ENCODE measurements at regions of chr1 and their contacts with region 1.

Region 1: GRCh38 chr1:154760469-154760933 is 109.6 kb downstream of the KCNN3 start:
- DNase-seq: peak; percentile 90
- ATAC-seq: peak; percentile 57
- H3K4me3 Mint-ChIP-seq: peak overlapping the region; percentile 69
- H3K27ac Mint-ChIP-seq: peak overlapping the region; percentile 97
- H3K4me1 Mint-ChIP-seq: peaks cover 51% of the 10 kb centered on the region
- H3K27me3 Mint-ChIP-seq: no peaks in the 10 kb centered on the region

Region 2: DNA sequence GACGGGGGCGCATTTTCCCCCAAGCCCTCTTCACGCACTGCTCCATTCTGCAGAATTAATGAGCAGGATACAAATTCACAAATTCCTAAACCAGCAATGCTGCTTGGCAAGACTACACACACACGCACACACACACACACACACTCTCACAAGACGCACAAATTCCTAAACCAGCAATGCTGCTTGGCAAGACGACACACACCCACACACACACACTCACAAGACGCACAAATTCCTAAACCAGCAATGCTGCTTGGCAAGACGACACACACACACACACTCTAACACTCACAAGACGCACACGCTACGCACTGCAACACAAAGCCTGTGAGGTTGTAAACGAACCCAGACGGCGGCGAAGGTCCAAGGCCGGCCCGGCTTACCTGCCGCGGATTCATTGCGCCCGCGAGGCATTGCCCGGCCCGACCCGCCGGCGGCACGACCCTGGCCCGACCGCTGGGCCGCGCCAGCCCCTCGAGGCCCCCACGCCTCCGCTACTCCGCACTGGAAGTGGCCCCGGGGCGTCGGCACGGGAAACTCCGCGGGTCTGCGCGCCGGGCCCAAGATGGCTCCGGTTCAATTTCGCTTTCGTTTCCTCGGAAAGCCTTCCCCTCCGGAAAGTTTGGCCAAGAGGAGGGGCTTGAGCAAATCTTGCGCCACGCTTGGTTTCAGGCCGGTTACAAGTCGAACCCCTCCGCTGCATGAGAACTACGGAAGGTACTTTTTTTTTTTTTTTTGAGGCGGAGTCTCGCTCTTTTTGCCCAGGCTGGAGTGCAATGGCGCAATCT is 152.7 kb before region 1 on chr1 and contains the start of gene ADAR:
- CTCF ChIA-PET with region 1: interaction called, 3 read pairs
- POLR2A ChIA-PET with region 1: no interaction called
- intact Hi-C with region 1: loop called in 1 of 2 experiments (anchors 1 kb)
- DNase-seq: peak; percentile 95
- ATAC-seq: peak; percentile 69
- H3K4me3 Mint-ChIP-seq: peak within 1 kb of the TSS; percentile 95
- H3K27ac Mint-ChIP-seq: peak within 1 kb of the TSS; percentile 99
- H3K4me1 Mint-ChIP-seq: peaks cover 75% of the 10 kb centered on the region
- H3K27me3 Mint-ChIP-seq: no peaks in the 10 kb centered on the region
- total RNA-seq, gene ADAR: 310 to 332 TPM

Region 3: GRCh38 chr1:154669464-154670282 is 90.8 kb before region 1 on chr1:
- CTCF ChIA-PET with region 1: interaction called, 7 read pairs
- POLR2A ChIA-PET with region 1: no interaction called
- intact Hi-C with region 1: loop called in 1 of 2 experiments (anchors 1 kb)
- DNase-seq: peak; percentile 88
- ATAC-seq: peak; percentile 100
- H3K4me3 Mint-ChIP-seq: no peak overlapping the region
- H3K27ac Mint-ChIP-seq: no peak overlapping the region
- H3K4me1 Mint-ChIP-seq: peaks cover 17% of the 10 kb centered on the region
- H3K27me3 Mint-ChIP-seq: peaks cover 2% of the 10 kb centered on the region

Region 4: GRCh38 chr1:154736841-154737240 is 23.7 kb before region 1 on chr1:
- CTCF ChIA-PET with region 1: interaction called, 13 read pairs
- POLR2A ChIA-PET with region 1: no interaction called
- intact Hi-C with region 1: loop called in 1 of 2 experiments (anchors 1 kb)
- DNase-seq: peak; percentile 80
- ATAC-seq: peak; percentile 97
- H3K4me3 Mint-ChIP-seq: peak overlapping the region; percentile 37
- H3K27ac Mint-ChIP-seq: peak overlapping the region; percentile 90
- H3K4me1 Mint-ChIP-seq: peaks cover 43% of the 10 kb centered on the region
- H3K27me3 Mint-ChIP-seq: no peaks in the 10 kb centered on the region

Region 5: DNA sequence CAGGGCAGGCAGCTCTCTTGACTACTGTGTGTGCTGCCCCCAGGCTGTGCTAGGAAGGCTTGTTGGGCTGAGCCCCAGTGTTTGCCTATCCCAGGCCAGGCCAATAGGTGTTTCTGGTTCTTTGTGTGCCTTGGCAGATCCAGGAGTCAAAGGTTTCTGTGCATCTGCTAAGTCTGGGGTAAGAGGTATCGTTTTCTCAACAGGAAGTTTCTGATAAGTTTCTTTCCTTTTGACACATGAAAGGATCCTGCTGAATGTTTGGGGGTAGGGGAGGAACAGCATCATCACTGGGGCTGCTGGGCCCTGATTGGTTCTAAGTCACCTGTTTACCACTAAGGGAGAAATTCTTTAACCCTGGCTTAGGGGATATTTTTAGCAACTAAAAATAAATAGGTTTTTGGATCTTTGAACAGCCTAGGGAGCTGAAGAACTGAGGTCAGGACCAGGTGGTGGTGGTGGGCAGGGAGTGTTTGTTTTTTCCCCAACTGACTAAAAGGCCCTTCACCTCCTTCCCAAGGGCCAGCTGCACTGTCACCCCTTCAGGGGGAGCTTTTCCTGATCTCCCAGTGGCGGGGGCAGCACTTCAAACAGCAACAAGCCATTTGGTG is 24.5 kb after region 1 on chr1:
- CTCF ChIA-PET with region 1: interaction called, 5 read pairs
- POLR2A ChIA-PET with region 1: no interaction called
- intact Hi-C with region 1: loop called in 1 of 2 experiments (anchors 1 kb)
- DNase-seq: peak; percentile 77
- ATAC-seq: peak; percentile 98
- H3K4me3 Mint-ChIP-seq: peak overlapping the region; percentile 35
- H3K27ac Mint-ChIP-seq: peak overlapping the region; percentile 95
- H3K4me1 Mint-ChIP-seq: peaks cover 37% of the 10 kb centered on the region
- H3K27me3 Mint-ChIP-seq: no peaks in the 10 kb centered on the region

Region 6: DNA sequence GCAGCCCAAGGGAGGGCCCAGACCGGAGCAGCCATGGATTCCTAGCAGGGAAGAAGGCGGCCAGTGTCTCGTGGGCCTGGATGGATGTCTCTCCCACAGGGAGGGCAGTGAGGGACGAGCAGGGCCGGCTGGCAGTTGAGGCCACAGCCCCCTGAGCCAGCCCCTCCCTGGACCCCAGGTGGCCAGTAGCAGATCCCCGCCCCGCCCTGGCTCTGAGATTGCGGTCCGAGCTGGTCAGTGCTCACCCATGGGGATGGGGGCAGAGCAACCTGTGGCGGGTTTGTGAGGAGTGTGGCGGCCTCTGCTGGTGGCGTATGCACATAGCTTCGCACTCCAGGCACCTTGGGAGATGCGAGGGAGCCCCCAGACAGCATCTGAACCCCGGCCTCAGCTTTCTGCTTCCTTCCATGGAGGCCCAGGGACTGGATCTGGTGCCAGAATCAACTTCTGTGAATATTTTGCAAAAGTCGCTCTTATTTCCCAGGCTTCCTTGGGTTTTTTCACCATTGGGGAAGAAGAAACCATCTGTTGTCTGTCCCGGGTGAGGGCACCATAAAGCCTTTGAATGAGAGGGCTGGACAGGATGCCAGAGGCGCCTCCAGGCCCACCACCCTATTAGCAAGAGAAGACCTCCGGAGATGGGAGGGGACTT is 118.0 kb after region 1 on chr1:
- CTCF ChIA-PET with region 1: interaction called, 7 read pairs
- POLR2A ChIA-PET with region 1: no interaction called
- intact Hi-C with region 1: loop called (anchors 5 kb)
- DNase-seq: peak; percentile 87
- ATAC-seq: peak; percentile 95
- H3K4me3 Mint-ChIP-seq: no peak overlapping the region
- H3K27ac Mint-ChIP-seq: no peak overlapping the region
- H3K4me1 Mint-ChIP-seq: peaks cover 10% of the 10 kb centered on the region
- H3K27me3 Mint-ChIP-seq: peaks cover 4% of the 10 kb centered on the region

Measured in activated CD4-positive, alpha-beta T cell treated with anti-CD3 and anti-CD28 coated beads for 36 hours (primary cell).